ENCODE measurements at regions of chr17 and their contacts with region 1.

Region 1: GRCh38 chr17:34361478-34362061 is 1.5 kb downstream of the CCL1 start:
- DNase-seq: peak; percentile 90 to 91
- ATAC-seq: peak; percentile 90 to 98
- H3K4me3 ChIP-seq: no peak overlapping the region
- H3K27ac ChIP-seq: no peak overlapping the region
- H3K4me1 ChIP-seq: no peaks in the 10 kb centered on the region
- CTCF ChIP-seq: peak; percentile 100
- EP300 ChIP-seq: no peak
- POLR2A ChIP-seq: no peak
- RAD21 ChIP-seq: peak; percentile 99 to 100

Region 2: GRCh38 chr17:34163646-34164045 is 197.9 kb before region 1 on chr17:
- CTCF ChIA-PET with region 1: interaction called, 44 read pairs
- POLR2A ChIA-PET with region 1: no interaction called
- DNase-seq: peak; percentile 23 to 29
- ATAC-seq: peak; percentile 79 to 87; a peak in 5 of 6 replicates
- H3K4me3 ChIP-seq: no peak overlapping the region
- H3K27ac ChIP-seq: no peak overlapping the region
- H3K4me1 ChIP-seq: no peaks in the 10 kb centered on the region
- CTCF ChIP-seq: peak; percentile 32; the same call in 2 of the 3 replicates
- EP300 ChIP-seq: no peak
- POLR2A ChIP-seq: no peak
- RAD21 ChIP-seq: peak; percentile 43 to 54

Region 3: GRCh38 chr17:34207572-34207971 is 154.0 kb before region 1 on chr17:
- CTCF ChIA-PET with region 1: interaction called, 571 read pairs
- POLR2A ChIA-PET with region 1: no interaction called
- DNase-seq: no peak
- ATAC-seq: no peak
- H3K4me3 ChIP-seq: no peak overlapping the region
- H3K27ac ChIP-seq: no peak overlapping the region
- H3K4me1 ChIP-seq: no peaks in the 10 kb centered on the region
- CTCF ChIP-seq: no peak
- EP300 ChIP-seq: no peak
- POLR2A ChIP-seq: no peak
- RAD21 ChIP-seq: no peak

Region 4: DNA sequence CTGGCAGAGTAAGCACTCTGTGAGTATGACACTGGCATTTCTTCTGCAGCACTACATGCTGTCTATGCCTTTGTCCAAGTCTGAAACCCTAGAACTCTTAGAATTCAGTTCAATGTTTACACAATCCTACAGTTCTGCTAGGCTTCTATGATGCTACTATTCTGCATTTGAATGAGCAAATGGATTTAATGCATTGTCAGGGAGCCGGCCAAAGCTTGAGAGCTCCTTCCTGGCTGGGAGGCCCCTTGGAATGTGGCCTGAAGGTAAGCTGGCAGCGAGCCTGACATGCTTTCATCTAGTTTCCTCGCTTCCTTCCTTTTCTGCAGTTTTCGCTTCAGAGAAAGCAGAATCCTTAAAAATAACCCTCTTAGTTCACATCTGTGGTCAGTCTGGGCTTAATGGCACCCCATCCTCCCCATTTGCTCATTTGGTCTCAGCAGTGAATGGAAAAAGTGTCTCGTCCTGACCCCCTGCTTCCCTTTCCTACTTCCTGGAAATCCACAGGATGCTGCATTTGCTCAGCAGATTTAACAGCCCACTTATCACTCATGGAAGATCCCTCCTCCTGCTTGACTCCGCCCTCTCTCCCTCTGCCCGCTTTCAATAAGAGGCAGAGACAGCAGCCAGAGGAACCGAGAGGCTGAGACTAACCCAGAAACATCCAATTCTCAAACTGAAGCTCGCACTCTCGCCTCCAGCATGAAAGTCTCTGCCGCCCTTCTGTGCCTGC is 106.8 kb before region 1 on chr17 and contains the start of gene CCL2:
- CTCF ChIA-PET with region 1: interaction called, 57 read pairs
- POLR2A ChIA-PET with region 1: no interaction called
- DNase-seq: peak; percentile 75 to 76
- ATAC-seq: peak; percentile 72 to 80
- H3K4me3 ChIP-seq: peak within 1 kb of the TSS; percentile 40
- H3K27ac ChIP-seq: peak within 1 kb of the TSS; percentile 73 to 87
- H3K4me1 ChIP-seq: peaks cover 59% of the 10 kb centered on the region
- CTCF ChIP-seq: no peak
- EP300 ChIP-seq: no peak
- POLR2A ChIP-seq: peak; percentile 30; the same call in 1 of the 2 replicates
- RAD21 ChIP-seq: no peak
- polyA plus RNA-seq, gene CCL2: 17.6 and 25.9 TPM in 2 replicates

Region 5: GRCh38 chr17:34300652-34301370 is 60.8 kb before region 1 on chr17:
- CTCF ChIA-PET with region 1: interaction called, 13 read pairs
- POLR2A ChIA-PET with region 1: no interaction called
- DNase-seq: no peak
- ATAC-seq: no peak
- H3K4me3 ChIP-seq: no peak overlapping the region
- H3K27ac ChIP-seq: no peak overlapping the region
- H3K4me1 ChIP-seq: no peaks in the 10 kb centered on the region; the same call in 2 of the 3 replicates
- CTCF ChIP-seq: no peak
- EP300 ChIP-seq: no peak
- POLR2A ChIP-seq: no peak
- RAD21 ChIP-seq: no peak

Region 6: GRCh38 chr17:34337701-34338100 is 23.9 kb before region 1 on chr17:
- CTCF ChIA-PET with region 1: interaction called, 18 read pairs
- POLR2A ChIA-PET with region 1: no interaction called
- DNase-seq: no peak
- ATAC-seq: no peak
- H3K4me3 ChIP-seq: no peak overlapping the region
- H3K27ac ChIP-seq: no peak overlapping the region
- H3K4me1 ChIP-seq: no peaks in the 10 kb centered on the region
- CTCF ChIP-seq: no peak
- EP300 ChIP-seq: no peak
- POLR2A ChIP-seq: no peak
- RAD21 ChIP-seq: no peak

Region 7: GRCh38 chr17:34386697-34387550 is 25.4 kb after region 1 on chr17:
- CTCF ChIA-PET with region 1: interaction called, 16 read pairs
- POLR2A ChIA-PET with region 1: no interaction called
- DNase-seq: no peak
- ATAC-seq: no peak
- H3K4me3 ChIP-seq: no peak overlapping the region
- H3K27ac ChIP-seq: no peak overlapping the region
- H3K4me1 ChIP-seq: no peaks in the 10 kb centered on the region
- CTCF ChIP-seq: no peak
- EP300 ChIP-seq: no peak
- POLR2A ChIP-seq: no peak
- RAD21 ChIP-seq: no peak